ENCODE measurements at regions of chr11 and their contacts with region 1.

Region 1: GRCh38 chr11:69918938-69919650 is 99.9 kb upstream of the FGF3 start:
- DNase-seq: no peak
- H3K4me3 ChIP-seq: no peak overlapping the region
- H3K27me3 ChIP-seq: peaks cover 5% of the 10 kb centered on the region
- CTCF ChIP-seq: peak; percentile 94

Region 2: GRCh38 chr11:69854719-69855118 is 64.4 kb before region 1 on chr11:
- CTCF ChIA-PET with region 1: no interaction called
- POLR2A ChIA-PET with region 1: no interaction called
- DNase-seq: no peak
- H3K4me3 ChIP-seq: no peak overlapping the region
- H3K27me3 ChIP-seq: peaks cover 5% of the 10 kb centered on the region
- CTCF ChIP-seq: no peak

Region 3: DNA sequence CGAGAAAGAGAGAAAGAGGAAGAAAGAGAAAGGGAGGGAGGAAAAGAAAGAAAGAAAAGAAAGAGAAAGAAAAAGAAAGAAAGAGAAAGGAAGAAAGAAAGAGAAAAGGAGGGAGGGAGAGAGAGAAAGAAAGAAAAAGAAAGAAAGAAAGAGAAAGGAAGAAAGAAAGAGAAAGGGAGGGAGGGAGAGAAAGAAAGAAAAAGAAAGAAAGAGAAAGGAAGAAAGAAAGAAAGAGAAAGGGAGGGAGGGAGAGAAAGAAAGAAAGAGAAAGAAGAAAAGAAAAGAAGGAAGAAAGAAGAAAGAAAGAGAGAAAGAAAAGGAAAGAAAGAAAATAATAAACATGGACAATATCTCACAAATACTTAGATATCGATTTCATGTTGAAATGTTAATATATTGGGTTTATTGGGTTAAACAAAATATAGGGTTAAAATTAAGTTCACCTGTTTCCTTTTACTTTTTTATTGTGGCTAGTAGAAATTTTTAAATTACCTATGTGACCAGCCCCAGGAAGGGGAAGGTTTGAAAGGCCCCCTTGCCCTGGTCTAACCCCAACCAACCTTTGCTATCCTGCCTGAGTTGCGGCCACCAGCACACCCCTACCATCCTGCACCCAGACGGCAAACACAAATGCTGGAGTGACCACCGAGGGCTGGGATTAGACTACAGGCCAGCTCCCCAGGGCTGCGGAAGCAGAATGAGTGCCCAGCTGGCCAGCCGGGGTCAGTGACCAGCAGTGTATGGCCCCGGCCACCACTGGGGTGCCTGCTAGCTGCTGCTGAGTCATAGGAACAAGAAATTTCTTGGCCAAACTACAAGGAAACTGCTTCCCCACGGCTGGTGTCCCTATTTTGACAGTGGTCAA is 18.9 kb before region 1 on chr11:
- CTCF ChIA-PET with region 1: interaction called, 13 read pairs
- POLR2A ChIA-PET with region 1: no interaction called
- DNase-seq: no peak
- H3K4me3 ChIP-seq: no peak overlapping the region
- H3K27me3 ChIP-seq: peaks cover 2% of the 10 kb centered on the region; the same call in 1 of the 2 replicates
- CTCF ChIP-seq: no peak

Region 4: DNA sequence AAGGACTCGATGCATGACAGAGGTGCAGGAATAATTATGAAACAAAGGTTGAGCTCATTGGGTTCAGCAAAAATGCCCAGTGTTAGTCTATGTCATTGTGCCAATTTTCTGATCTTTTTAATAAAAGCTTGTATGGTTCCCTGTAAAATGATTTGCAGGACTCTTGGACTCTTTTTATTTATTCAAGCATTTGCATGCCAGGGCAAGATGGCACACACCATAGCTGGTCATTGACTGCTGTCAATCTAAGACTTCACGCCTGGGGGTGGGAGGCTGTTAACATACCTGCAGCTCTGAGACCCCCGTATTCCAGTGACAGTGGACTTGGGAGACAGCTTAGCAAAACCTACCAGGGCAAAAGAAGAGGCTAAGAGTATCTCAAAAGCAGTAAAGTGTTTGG is 127.0 kb after region 1 on chr11:
- CTCF ChIA-PET with region 1: no interaction called
- POLR2A ChIA-PET with region 1: interaction called, 20 read pairs
- DNase-seq: no peak
- H3K4me3 ChIP-seq: no peak overlapping the region
- H3K27me3 ChIP-seq: peaks cover 7% of the 10 kb centered on the region; the same call in 1 of the 2 replicates
- CTCF ChIP-seq: no peak

Region 5: DNA sequence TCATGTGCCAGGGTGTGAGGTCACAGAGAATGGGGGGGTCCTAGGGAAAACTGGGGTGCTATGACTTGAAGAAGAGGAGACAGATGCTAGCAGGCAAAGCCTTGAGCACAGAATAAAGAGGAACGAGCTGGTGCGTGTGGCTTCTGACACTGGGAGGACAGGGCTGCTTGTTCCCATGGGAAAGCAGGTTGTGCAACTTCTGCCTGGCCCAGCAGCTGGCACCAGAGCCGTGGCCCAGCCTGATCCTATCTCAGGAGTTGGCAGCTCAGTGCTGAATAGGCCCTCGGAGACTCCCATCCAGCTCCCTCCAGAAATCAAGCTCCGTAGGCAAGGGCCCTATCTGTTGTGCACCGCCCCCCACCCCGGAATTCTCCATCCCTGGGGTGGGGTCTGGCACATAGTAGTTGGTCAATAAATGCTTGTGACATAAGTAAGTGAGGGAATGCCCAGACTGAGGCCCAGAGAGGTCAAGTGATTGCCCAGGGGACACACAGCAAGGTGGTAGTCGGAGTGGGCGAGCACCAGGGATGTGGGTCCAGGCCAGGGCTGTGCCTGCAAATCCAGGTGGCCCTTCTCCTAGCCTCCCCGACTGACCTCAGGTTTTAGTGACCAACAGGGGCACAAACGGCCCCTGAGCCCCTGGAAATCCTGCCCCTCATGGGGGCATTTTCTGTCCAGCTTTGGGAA is 264.5 kb after region 1 on chr11:
- CTCF ChIA-PET with region 1: interaction called, 13 read pairs
- POLR2A ChIA-PET with region 1: no interaction called
- DNase-seq: no peak
- H3K4me3 ChIP-seq: no peak overlapping the region
- H3K27me3 ChIP-seq: no peaks in the 10 kb centered on the region; the same call in 1 of the 2 replicates
- CTCF ChIP-seq: no peak

Region 6: DNA sequence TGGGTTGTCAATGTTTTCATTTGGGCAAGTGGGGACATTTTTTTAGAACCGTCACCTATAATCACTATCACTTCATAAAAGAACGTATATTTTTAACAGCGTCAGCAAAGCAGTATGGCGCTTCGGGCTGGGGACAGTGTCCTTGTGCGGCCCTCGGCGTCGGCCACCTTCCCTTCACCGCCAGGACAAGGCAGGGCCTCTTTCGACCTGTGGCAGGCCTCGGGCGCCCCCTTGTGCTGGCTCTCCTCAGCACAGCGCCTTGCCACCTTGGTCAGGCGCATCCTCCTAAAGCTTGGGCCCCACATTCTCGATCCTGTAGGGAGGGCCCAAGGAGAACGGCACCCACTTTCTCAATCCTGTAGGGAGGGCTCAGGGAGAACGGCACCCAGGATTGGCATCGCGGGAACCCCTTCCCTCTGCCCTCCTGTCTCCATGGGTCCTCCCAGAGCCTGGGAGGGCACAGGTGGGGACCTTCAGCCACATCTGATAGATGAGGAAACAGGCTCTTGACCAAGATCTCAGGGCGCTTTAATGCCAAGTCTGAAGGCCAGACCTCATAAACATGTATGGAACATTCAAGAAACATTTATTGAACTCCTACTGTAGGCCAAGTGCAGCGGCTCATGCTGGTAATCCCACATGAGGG is 272.5 kb after region 1 on chr11:
- CTCF ChIA-PET with region 1: interaction called, 27 read pairs
- POLR2A ChIA-PET with region 1: no interaction called
- DNase-seq: no peak
- H3K4me3 ChIP-seq: no peak overlapping the region
- H3K27me3 ChIP-seq: no peaks in the 10 kb centered on the region
- CTCF ChIP-seq: peak; percentile 94

Region 7: GRCh38 chr11:70201882-70202861 is 283.1 kb after region 1 on chr11:
- CTCF ChIA-PET with region 1: interaction called, 13 read pairs
- POLR2A ChIA-PET with region 1: no interaction called
- DNase-seq: no peak
- H3K4me3 ChIP-seq: peak overlapping the region; percentile 63
- H3K27me3 ChIP-seq: peaks cover 2% of the 10 kb centered on the region
- CTCF ChIP-seq: no peak

Measured in BJ (cell line).